ENCODE measurements at regions of chr12 and their contacts with region 1.

Region 1: DNA sequence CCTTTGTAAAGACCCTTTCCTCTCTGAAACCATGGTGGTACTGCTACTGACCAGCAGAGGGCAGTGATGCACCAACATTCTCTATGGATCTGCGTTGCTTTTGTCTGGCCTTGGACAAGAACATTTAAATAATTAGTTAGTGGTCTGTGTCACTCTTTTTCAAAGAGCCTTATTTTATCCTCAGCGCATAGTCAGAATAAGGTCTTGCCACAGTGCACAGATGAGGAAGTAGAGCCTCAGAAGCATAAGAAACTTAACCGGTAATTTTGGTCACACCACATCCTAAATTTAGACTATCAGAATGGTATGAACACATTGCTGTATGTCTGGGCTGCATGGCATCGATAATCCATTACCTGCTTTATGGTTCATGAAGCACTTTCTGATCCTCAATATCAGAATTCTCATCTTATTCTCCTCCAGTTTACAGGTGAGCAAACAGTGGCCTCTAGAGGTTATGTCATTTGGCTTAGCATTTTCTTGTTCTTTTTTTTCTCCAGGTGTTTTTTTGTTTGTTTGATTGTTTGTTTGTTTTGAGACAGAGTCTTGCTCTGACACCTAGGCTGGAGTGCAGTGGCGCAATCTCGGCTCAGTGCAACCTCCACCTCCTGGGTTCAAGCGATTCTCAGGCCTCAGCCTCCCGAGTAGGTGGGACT is 23.7 kb upstream of the IFT81 start:
- DNase-seq: peak in 1 of 2 donors; percentile 89
- H3K4me3 ChIP-seq: no peak overlapping the region
- H3K27ac ChIP-seq: peak overlapping the region; percentile 4 to 56
- H3K4me1 ChIP-seq: peaks cover 0 to 16% of the 10 kb centered on the region in 2 donors
- H3K27me3 ChIP-seq: no peaks in the 10 kb centered on the region
- CTCF ChIP-seq: peak; percentile 85 to 88 (median 87)

Region 2: DNA sequence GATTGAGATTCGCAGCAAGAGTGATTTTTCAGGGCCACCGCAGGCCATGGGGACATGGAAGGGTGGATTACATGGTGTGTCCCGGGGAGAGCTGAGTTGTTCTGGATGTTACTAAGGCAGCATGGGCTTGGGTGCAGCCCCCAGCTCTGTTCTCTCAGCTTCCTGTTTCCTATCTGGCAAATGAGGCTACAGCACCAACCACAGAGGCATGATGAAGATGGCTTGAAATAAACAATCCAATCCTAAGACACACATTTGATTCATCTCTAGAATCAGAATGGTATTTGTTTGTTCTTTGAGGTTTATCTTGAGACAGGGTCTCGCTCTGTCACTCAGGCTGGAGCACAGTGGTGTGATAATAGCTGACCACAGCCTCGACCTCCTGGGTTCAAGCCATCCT is 241.7 kb before region 1 on chr12:
- intact Hi-C with region 1: no loop called
- DNase-seq: no peak
- H3K4me3 ChIP-seq: no peak overlapping the region
- H3K27ac ChIP-seq: no peak overlapping the region
- H3K4me1 ChIP-seq: no peaks in the 10 kb centered on the region
- H3K27me3 ChIP-seq: no peaks in the 10 kb centered on the region
- CTCF ChIP-seq: no peak

Region 3: GRCh38 chr12:110124184-110124995 is 23.9 kb after region 1 on chr12 and contains the start of gene IFT81:
- intact Hi-C with region 1: loop called (anchors 1 kb)
- DNase-seq: peak; percentile 71 to 97
- H3K4me3 ChIP-seq: peak within 1 kb of the TSS; percentile 92 to 93
- H3K27ac ChIP-seq: peak within 1 kb of the TSS; percentile 93
- H3K4me1 ChIP-seq: peaks cover 0 to 7% of the 10 kb centered on the region in 2 donors
- H3K27me3 ChIP-seq: no peaks in the 10 kb centered on the region
- CTCF ChIP-seq: peak in 1 of 3 experiments; percentile 16
- total RNA-seq, gene IFT81: 12.0 TPM

Region 4: GRCh38 chr12:110141389-110141788 is 40.9 kb after region 1 on chr12:
- intact Hi-C with region 1: loop called (anchors 5 kb)
- DNase-seq: peak in 1 of 2 donors; percentile 80
- H3K4me3 ChIP-seq: no peak overlapping the region
- H3K27ac ChIP-seq: peak overlapping the region; percentile 42 to 73
- H3K4me1 ChIP-seq: peaks cover 0 to 3% of the 10 kb centered on the region in 2 donors
- H3K27me3 ChIP-seq: no peaks in the 10 kb centered on the region
- CTCF ChIP-seq: no peak

Region 5: DNA sequence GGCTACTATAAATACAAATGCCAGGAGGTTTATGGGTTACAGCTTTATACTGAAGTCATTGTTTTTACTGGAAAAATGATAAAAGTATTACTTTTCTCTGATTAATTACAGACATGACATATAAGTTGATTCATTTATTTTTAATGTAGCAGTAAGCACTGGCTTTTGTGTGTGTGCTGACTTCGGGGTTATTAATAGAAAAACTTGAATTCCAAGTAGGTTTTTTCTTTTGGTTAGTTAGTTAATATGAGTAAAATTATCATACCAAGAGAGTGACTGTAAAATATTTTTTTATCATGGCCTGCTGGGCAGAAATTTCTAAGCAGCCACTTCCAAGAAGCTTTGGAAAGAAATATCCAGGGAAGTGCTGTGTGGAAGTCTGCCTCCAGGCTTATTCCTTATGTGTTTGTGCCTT is 80.2 kb after region 1 on chr12:
- intact Hi-C with region 1: loop called (anchors 5 kb)
- DNase-seq: no peak
- H3K4me3 ChIP-seq: no peak overlapping the region
- H3K27ac ChIP-seq: peak overlapping the region; percentile 57 to 80
- H3K4me1 ChIP-seq: peaks cover 5 to 32% of the 10 kb centered on the region in 2 donors
- H3K27me3 ChIP-seq: no peaks in the 10 kb centered on the region
- CTCF ChIP-seq: no peak

Region 6: DNA sequence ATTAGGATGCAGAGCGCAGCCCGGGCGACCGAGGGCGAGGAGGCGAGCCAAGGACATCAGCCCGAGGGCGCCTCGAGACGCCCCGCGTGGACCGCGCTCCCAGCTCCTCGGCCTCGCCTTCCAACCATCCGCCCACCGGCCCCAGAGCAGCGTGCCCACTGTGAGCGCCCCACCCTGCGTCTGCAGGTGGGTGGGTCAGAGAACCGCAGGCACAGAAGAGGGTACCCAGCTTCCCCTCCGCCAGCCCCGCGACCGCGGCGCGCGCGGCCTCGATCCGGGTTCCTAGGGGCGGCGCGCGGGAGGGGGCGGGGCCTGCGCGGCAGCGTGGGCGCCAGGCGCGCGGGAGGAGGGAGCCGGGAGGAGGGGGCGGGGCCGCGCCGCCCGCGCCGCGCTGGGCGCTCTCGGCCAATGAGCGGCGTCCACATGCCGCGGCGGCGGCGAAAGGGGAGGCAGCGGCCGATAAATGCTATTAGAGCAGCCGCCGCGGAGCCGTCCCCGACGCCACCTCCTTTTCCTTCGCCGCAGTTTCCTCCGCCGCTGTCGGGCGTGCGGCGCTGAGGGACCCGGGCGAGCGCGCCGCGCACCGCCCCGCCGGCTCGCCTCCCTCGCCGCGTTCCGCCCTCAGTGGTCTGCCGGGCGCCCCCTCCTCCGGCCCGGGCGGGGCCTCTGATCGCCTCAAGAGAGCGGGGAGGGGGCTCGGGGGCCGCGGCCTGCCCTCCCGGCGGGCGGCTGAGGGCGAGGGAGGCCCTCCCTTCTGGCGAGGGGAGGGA is 180.5 kb after region 1 on chr12 and contains the start of gene ATP2A2:
- intact Hi-C with region 1: loop called (anchors 2 kb)
- DNase-seq: peak; percentile 57 to 93
- H3K4me3 ChIP-seq: peak within 1 kb of the TSS; percentile 93 to 99
- H3K27ac ChIP-seq: peak within 1 kb of the TSS; percentile 99 to 100
- H3K4me1 ChIP-seq: peaks cover 0 to 3% of the 10 kb centered on the region in 2 donors
- H3K27me3 ChIP-seq: no peaks in the 10 kb centered on the region
- CTCF ChIP-seq: no peak
- total RNA-seq, gene ATP2A2: 185 TPM

Region 7: GRCh38 chr12:110312581-110313360 is 212.3 kb after region 1 on chr12:
- intact Hi-C with region 1: loop called (anchors 10 kb)
- DNase-seq: no peak
- H3K4me3 ChIP-seq: no peak overlapping the region
- H3K27ac ChIP-seq: peak overlapping the region; percentile 70 to 75
- H3K4me1 ChIP-seq: peaks cover 6 to 44% of the 10 kb centered on the region in 2 donors
- H3K27me3 ChIP-seq: no peaks in the 10 kb centered on the region
- CTCF ChIP-seq: no peak

Region 8: GRCh38 chr12:110431957-110432587 is 331.6 kb after region 1 on chr12:
- intact Hi-C with region 1: loop called (anchors 1 kb)
- DNase-seq: peak in 1 of 2 donors; percentile 65
- H3K4me3 ChIP-seq: peak overlapping the region in 1 of 2 donors; percentile 69
- H3K27ac ChIP-seq: peak overlapping the region in 1 of 2 donors; percentile 31
- H3K4me1 ChIP-seq: no peaks in the 10 kb centered on the region
- H3K27me3 ChIP-seq: no peaks in the 10 kb centered on the region
- CTCF ChIP-seq: no peak

Measured in ascending aorta (tissue), 2 donors.